Left colon (tissue), 2 donors: ENCODE measurements at regions of chr5 and their contacts with region 1.

Region 1: GRCh38 chr5:43305948-43306565 is 7.2 kb downstream of the HMGCS1 start:
- DNase-seq: no peak
- ATAC-seq: peak; percentile 78

Region 2: GRCh38 chr5:43085453-43085852 is 220.6 kb before region 1 on chr5:
- intact Hi-C with region 1: no loop called
- DNase-seq: no peak
- ATAC-seq: no peak

Region 3: DNA sequence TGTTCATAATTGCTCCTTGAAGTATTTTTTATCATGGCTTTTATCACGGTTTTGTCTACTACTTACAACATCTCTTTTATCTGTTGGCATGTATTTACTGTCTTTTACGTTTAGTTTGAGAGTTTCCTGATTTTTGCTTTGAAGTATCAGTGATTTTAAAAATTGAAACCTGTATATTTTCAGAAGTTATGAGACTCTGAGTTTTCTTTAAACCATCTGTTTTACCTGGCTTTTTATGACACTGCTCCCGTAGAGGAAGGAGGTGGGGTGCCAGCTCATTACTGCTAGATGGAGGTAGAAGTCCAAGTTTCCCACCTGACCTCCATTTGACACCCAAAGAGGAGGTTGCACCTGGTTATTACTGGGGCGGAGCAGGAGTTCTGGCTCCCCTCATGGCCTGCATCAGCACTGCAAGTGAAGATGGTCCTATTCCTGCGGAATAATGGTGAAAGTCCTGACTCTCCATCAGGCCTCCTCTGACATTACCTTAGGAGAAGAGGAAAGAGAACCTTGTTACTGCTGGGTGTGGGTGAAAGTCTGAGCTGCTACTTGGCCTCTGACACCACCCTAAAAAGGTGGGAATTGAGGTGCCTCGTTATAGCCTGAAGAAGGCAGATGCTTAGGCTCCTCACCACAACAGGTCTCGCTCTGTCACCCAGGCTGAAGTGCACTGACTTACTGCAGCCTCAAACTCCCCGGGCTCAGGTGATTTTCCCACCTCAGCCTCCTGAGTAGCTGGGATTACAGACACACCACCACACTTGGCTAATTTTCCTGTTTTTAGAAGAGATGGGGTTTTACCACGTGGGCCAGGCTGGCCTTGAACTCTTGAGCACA is 195.2 kb before region 1 on chr5:
- intact Hi-C with region 1: loop called in 1 of 2 experiments (anchors 10 kb)
- DNase-seq: peak; percentile 38 to 43
- ATAC-seq: peak; percentile 95

Region 4: DNA sequence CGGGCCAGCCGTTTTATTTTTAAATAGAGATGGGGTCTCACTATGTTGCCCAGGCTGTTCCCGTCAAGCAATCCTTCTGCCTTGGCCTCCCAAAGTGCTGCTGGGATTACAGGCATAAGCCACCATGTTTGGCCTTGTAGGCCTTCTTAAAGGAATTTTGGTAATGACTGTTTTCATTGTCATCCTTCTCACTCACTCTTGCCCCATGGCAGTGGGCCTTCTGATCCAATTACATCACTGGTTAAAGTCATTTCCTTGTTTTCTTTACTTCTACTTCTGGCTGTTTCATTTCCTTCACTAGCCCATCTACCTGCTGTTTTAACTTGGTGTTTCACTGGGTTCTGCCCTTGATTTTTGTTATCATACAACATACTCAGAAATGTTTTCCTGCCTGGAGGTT is 134.1 kb before region 1 on chr5:
- intact Hi-C with region 1: no loop called
- DNase-seq: no peak
- ATAC-seq: no peak